Activated T-helper 1 cell treated with anti-CD3 and anti-CD28 coated beads, Interleukin-12 subunit alpha, Interleukin-12 subunit beta, Interleukin-2, Interleukin-4 antibody, amounts not matched to agents 30 ng/mL and 10 ng/mL and 1 ng/mL, durations not matched to agents 14 hours and 24 hours and 36 hours (primary cell): ENCODE measurements at regions of chr7 and their contacts with region 1.

Region 1: GRCh38 chr7:90155206-90155605 is 937 bp downstream of the STEAP1 start:
- DNase-seq: no peak
- H3K4me3 Mint-ChIP-seq: peak overlapping the region; percentile 78
- H3K27ac Mint-ChIP-seq: peak overlapping the region; percentile 12
- H3K4me1 Mint-ChIP-seq: peaks cover 5% of the 10 kb centered on the region
- H3K27me3 Mint-ChIP-seq: peaks cover 10% of the 10 kb centered on the region

Region 2: GRCh38 chr7:90172624-90173023 is 17.4 kb after region 1 on chr7:
- intact Hi-C with region 1: no loop called
- DNase-seq: no peak
- H3K4me3 Mint-ChIP-seq: peak overlapping the region; percentile 0
- H3K27ac Mint-ChIP-seq: peak overlapping the region; percentile 62
- H3K4me1 Mint-ChIP-seq: peaks cover 8% of the 10 kb centered on the region
- H3K27me3 Mint-ChIP-seq: no peaks in the 10 kb centered on the region

Region 3: GRCh38 chr7:90211391-90212148 is 56.4 kb after region 1 on chr7 and contains the start of gene STEAP2:
- intact Hi-C with region 1: loop called (anchors 5 kb)
- DNase-seq: peak; percentile 6
- H3K4me3 Mint-ChIP-seq: peak within 1 kb of the TSS; percentile 64
- H3K27ac Mint-ChIP-seq: no peak within 1 kb of the TSS
- H3K4me1 Mint-ChIP-seq: peaks cover 6% of the 10 kb centered on the region
- H3K27me3 Mint-ChIP-seq: peaks cover 24% of the 10 kb centered on the region
- total RNA-seq, gene STEAP2: 0.05 TPM in 1 of 2 replicates, not detected in the other

Region 4: DNA sequence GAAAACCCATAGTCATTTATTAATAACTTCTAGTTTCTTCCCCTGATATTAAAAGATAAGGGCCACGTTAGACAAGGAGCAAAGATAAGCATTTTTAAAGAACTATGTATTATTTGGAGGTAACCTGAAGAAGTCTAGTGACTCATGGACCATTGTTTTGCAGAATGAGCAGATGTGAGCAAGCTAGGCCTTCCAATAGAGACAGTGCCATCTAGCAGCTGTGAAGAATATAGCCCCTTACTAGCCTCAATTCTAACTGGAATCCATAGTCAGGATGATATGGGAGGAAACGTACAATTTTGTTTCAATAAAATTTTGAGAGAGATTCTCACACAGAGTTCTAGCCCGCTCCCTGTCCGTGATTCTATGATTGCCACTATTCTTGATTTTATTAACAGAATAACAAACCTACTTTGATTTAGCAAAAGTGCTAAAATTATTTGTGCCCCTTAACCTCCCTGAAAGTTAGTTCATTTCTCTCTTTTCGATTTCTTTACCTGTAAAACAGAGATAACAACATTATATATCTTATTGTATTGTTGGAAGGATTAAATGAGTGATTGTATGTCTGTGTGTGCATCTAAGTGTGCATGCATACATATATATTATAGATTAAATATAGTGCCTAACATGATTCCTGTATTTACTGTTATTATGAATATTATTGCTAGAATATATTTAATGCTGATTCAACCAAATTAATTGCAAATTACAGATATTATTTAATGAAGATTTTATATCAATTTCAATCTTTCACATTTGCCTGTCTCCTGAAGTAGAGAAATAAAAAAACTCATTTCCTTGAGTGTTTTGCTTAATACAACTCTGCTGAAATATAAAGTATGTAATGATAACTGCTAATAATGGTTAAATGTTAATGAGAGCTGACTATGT is 143.2 kb after region 1 on chr7:
- intact Hi-C with region 1: loop called (anchors 1 kb)
- DNase-seq: no peak
- H3K4me3 Mint-ChIP-seq: no peak overlapping the region
- H3K27ac Mint-ChIP-seq: no peak overlapping the region
- H3K4me1 Mint-ChIP-seq: no peaks in the 10 kb centered on the region
- H3K27me3 Mint-ChIP-seq: peaks cover 2% of the 10 kb centered on the region